ENCODE measurements at regions of chr12 and their contacts with region 1.

Region 1: DNA sequence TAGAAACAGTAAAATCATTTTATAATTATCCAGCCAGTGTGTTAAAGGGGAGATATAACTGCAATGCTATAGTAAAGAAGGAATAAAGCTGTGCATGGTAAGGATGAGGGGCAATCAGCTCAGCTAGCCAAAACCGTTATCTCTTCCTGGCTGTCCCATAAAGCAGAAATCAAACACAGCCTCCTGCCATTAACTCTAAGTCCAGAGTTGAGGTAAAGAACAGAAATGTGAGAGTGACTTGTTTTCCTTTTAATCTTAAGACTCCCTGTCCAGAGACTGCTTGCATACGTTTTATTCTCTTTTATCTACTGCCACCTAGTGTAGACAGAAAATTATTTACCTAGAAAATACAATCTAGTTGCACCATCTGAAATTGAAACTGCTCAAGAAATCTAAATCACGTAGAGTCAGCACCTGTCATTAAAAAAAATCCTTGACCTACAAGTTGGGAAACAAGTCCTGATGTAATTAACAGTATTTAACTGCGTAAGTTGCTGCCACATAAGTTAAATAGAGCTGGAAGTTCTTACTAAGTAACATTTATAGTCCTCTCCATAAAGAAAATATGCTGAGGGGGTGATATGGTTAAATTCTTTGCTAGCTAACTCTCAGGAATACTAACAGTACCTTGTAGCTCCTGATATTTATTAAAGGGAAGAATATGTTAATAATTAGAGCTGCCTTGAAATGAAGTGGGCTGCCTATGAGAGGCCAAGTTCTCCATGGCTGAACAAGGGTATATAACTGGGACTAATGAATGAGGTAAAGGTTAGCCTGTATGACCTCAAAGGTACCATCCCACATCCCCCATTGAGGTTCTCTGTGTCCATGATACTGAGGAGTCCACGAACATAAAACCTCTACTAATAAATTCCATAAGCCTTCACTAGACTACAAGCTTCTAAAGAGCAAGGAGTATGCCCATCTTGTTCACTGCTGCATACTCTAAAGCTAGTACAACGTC is 62.7 kb downstream of the GALNT4 start:
- DNase-seq: peak in 4 of 5 donors; percentile 57 to 62 (median 58)
- H3K4me3 ChIP-seq: no peak overlapping the region
- H3K4me3 Mint-ChIP-seq: peak overlapping the region in 4 of 8 donors; percentile 40 to 72 (median 58)
- H3K27ac ChIP-seq: no peak overlapping the region
- H3K27ac Mint-ChIP-seq: peak overlapping the region in 5 of 7 donors; percentile 49 to 78 (median 61)
- H3K4me1 ChIP-seq: peaks cover 12% of the 10 kb centered on the region
- H3K4me1 Mint-ChIP-seq: peaks cover 15 to 18% (median 17%) of the 10 kb centered on the region in 4 donors
- H3K27me3 ChIP-seq: no peaks in the 10 kb centered on the region
- H3K27me3 Mint-ChIP-seq: no peaks in the 10 kb centered on the region

Region 2: DNA sequence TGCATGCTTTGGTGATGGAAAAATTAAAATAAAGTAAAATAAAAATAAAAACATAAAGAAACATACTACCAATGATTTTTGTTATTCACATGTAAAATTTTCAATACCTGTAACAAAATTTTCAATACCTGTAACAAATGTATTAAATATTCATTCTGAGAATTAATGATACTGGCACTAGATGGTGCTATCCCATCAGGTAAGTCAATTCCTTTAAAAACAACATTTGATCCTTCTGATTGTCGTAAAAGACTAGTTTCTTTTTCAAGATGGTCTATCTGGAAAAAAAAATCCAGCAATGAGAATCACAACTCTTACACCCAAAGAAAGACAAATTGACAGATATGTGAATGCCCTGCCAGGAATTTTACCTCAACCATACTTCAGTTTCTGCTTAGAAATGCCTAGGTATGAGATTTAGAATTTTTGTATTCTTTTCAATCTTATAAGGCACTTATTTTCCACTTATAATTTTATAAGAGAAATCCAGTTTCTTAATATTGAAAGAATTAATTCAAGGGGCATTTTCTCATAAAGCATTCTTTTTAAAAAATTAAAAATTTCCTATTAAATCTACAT is 1350.8 kb before region 1 on chr12:
- CTCF ChIA-PET with region 1: no interaction called
- POLR2A ChIA-PET with region 1: no interaction called
- intact Hi-C with region 1: loop called (anchors 10 kb)
- DNase-seq: peak in 4 of 5 donors; percentile 16 to 27 (median 22)
- H3K4me3 ChIP-seq: no peak overlapping the region
- H3K4me3 Mint-ChIP-seq: peak overlapping the region in 7 of 8 donors; percentile 45 to 77 (median 64)
- H3K27ac ChIP-seq: no peak overlapping the region
- H3K27ac Mint-ChIP-seq: peak overlapping the region in 3 of 7 donors; percentile 43 to 84 (median 75)
- H3K4me1 ChIP-seq: no peaks in the 10 kb centered on the region
- H3K4me1 Mint-ChIP-seq: peaks cover 2 to 5% (median 3%) of the 10 kb centered on the region in 4 donors
- H3K27me3 ChIP-seq: no peaks in the 10 kb centered on the region
- H3K27me3 Mint-ChIP-seq: no peaks in the 10 kb centered on the region

Region 3: GRCh38 chr12:88218293-88218692 is 1243.6 kb before region 1 on chr12:
- CTCF ChIA-PET with region 1: no interaction called
- POLR2A ChIA-PET with region 1: no interaction called
- intact Hi-C with region 1: no loop called
- DNase-seq: no peak
- H3K4me3 ChIP-seq: no peak overlapping the region
- H3K4me3 Mint-ChIP-seq: no peak overlapping the region
- H3K27ac ChIP-seq: no peak overlapping the region
- H3K27ac Mint-ChIP-seq: no peak overlapping the region
- H3K4me1 ChIP-seq: no peaks in the 10 kb centered on the region
- H3K4me1 Mint-ChIP-seq: no peaks in the 10 kb centered on the region
- H3K27me3 ChIP-seq: no peaks in the 10 kb centered on the region
- H3K27me3 Mint-ChIP-seq: peaks cover 0 to 1% of the 10 kb centered on the region in 2 donors

Region 4: DNA sequence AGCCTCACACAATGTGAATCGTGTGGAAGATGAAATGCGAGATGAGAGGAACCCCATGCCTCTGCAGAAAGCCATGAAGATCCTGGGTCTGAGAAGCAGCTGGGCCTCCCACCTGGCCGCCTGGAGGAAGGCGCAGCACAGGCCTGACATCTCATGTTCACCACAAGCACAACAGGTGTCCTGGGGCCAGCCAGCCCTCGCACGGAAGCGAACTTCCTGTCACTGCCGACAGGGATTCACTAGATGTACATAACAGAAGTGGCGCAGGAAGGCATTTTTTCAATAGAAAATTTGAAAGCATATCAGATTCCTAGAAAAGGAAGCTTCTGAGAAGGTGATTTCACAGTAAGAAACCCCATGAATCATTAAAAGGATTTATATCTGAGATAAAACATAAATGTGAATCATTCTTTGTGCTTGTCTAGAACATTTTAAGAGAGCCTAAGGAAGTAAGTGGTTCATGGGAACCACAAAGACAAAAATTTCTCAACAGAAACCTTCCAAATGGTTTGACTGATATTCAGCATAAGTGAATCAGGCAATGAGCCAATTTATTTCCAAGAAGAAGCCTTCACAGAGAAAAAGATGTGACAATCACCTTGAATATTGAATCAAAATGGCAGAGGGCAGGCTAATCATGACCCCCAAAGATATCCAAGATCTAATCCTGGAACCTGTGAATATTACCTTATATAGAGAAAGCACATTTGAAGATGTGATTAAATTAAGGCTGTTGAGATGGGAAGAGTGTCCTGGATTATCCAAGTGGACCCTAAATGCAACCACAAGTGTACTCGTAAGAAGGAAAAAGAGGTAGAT is 421.6 kb before region 1 on chr12:
- CTCF ChIA-PET with region 1: interaction called, 10 read pairs
- POLR2A ChIA-PET with region 1: no interaction called
- intact Hi-C with region 1: no loop called
- DNase-seq: peak; percentile 42 to 68 (median 53)
- H3K4me3 ChIP-seq: no peak overlapping the region
- H3K4me3 Mint-ChIP-seq: peak overlapping the region; percentile 9 to 83 (median 62)
- H3K27ac ChIP-seq: peak overlapping the region; percentile 6
- H3K27ac Mint-ChIP-seq: peak overlapping the region; percentile 47 to 91 (median 80)
- H3K4me1 ChIP-seq: peaks cover 28% of the 10 kb centered on the region
- H3K4me1 Mint-ChIP-seq: peaks cover 26 to 37% (median 26%) of the 10 kb centered on the region in 4 donors
- H3K27me3 ChIP-seq: no peaks in the 10 kb centered on the region
- H3K27me3 Mint-ChIP-seq: peaks cover 0 to 2% of the 10 kb centered on the region in 2 donors

Region 5: DNA sequence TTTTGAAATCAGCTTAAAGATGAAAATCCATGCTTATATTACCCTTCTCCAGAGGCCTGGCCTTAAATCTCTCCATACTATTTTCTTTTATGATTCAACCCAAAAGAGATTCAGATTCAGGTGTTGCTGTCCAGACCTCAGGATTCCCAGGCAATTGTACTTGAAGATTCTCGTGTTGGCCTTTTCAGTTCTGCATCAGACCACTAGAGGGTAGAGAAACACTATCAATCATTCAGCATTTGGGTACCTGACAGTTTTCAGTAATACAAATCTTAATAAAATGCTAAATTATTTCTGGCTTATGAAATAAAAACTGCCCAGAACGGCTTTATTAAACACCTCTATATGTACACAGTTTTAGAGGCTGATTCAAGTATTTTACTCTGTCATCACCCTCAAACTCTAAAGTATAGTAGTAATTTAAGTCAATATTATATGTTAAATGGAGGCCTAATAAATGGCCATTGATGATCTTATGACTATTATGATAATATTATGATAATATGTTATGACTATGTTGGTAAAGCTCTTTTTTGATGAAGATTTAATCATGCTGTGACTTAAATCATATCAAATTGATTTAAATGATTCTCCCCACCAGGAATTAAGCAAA is 410.8 kb before region 1 on chr12:
- CTCF ChIA-PET with region 1: interaction called, 44 read pairs
- POLR2A ChIA-PET with region 1: no interaction called
- intact Hi-C with region 1: loop called (anchors 1 kb)
- DNase-seq: peak; percentile 35 to 60 (median 51)
- H3K4me3 ChIP-seq: no peak overlapping the region
- H3K4me3 Mint-ChIP-seq: no peak overlapping the region
- H3K27ac ChIP-seq: no peak overlapping the region
- H3K27ac Mint-ChIP-seq: no peak overlapping the region
- H3K4me1 ChIP-seq: no peaks in the 10 kb centered on the region
- H3K4me1 Mint-ChIP-seq: peaks cover 0 to 3% (median 1%) of the 10 kb centered on the region in 4 donors
- H3K27me3 ChIP-seq: no peaks in the 10 kb centered on the region
- H3K27me3 Mint-ChIP-seq: peaks cover 0 to 1% of the 10 kb centered on the region in 2 donors

Region 6: GRCh38 chr12:89156862-89157262 is 305.1 kb before region 1 on chr12:
- CTCF ChIA-PET with region 1: no interaction called
- POLR2A ChIA-PET with region 1: no interaction called
- intact Hi-C with region 1: no loop called
- DNase-seq: no peak
- H3K4me3 ChIP-seq: no peak overlapping the region
- H3K4me3 Mint-ChIP-seq: no peak overlapping the region
- H3K27ac ChIP-seq: no peak overlapping the region
- H3K27ac Mint-ChIP-seq: no peak overlapping the region
- H3K4me1 ChIP-seq: no peaks in the 10 kb centered on the region
- H3K4me1 Mint-ChIP-seq: peaks cover 0 to 3% (median 0%) of the 10 kb centered on the region in 4 donors
- H3K27me3 ChIP-seq: no peaks in the 10 kb centered on the region
- H3K27me3 Mint-ChIP-seq: peaks cover 0 to 2% of the 10 kb centered on the region in 2 donors

Region 7: DNA sequence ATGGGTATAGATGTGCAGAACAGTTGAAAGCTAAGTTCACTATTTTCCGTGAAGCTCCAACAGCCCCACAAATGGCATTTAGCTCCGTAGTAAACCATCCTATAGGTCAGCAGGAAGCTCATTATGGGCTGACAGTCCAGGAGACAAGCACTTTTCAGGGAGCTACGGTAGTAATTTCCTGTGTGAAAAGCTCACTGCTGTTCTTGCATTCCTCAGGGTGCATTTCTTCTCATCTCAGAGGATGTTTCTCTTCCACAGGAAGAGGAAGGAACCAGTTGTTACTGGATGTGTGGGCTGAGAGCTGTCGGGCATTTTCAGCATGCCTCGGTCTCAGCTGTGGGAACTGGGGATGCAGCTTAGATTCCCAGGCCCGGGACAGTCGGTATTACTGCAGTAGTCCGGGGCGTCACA is 10.1 kb before region 1 on chr12:
- CTCF ChIA-PET with region 1: interaction called, 11 read pairs
- POLR2A ChIA-PET with region 1: no interaction called
- intact Hi-C with region 1: no loop called
- DNase-seq: no peak
- H3K4me3 ChIP-seq: no peak overlapping the region
- H3K4me3 Mint-ChIP-seq: no peak overlapping the region
- H3K27ac ChIP-seq: no peak overlapping the region
- H3K27ac Mint-ChIP-seq: peak overlapping the region in 1 of 7 donors; percentile 13
- H3K4me1 ChIP-seq: no peaks in the 10 kb centered on the region
- H3K4me1 Mint-ChIP-seq: peaks cover 7 to 13% (median 9%) of the 10 kb centered on the region in 4 donors
- H3K27me3 ChIP-seq: no peaks in the 10 kb centered on the region
- H3K27me3 Mint-ChIP-seq: no peaks in the 10 kb centered on the region

Region 8: GRCh38 chr12:89529738-89530137 is 67.8 kb after region 1 on chr12:
- CTCF ChIA-PET with region 1: interaction called, 185 read pairs
- POLR2A ChIA-PET with region 1: interaction called, 23 read pairs
- intact Hi-C with region 1: loop called (anchors 2 kb)
- DNase-seq: peak in 4 of 5 donors; percentile 47 to 57 (median 52)
- H3K4me3 ChIP-seq: no peak overlapping the region
- H3K4me3 Mint-ChIP-seq: no peak overlapping the region
- H3K27ac ChIP-seq: no peak overlapping the region
- H3K27ac Mint-ChIP-seq: peak overlapping the region in 2 of 7 donors; percentile 12 to 81
- H3K4me1 ChIP-seq: peaks cover 11% of the 10 kb centered on the region
- H3K4me1 Mint-ChIP-seq: peaks cover 7 to 23% (median 14%) of the 10 kb centered on the region in 4 donors
- H3K27me3 ChIP-seq: no peaks in the 10 kb centered on the region
- H3K27me3 Mint-ChIP-seq: no peaks in the 10 kb centered on the region